ENCODE measurements at regions of chr7 and their contacts with region 1.

Region 1: DNA sequence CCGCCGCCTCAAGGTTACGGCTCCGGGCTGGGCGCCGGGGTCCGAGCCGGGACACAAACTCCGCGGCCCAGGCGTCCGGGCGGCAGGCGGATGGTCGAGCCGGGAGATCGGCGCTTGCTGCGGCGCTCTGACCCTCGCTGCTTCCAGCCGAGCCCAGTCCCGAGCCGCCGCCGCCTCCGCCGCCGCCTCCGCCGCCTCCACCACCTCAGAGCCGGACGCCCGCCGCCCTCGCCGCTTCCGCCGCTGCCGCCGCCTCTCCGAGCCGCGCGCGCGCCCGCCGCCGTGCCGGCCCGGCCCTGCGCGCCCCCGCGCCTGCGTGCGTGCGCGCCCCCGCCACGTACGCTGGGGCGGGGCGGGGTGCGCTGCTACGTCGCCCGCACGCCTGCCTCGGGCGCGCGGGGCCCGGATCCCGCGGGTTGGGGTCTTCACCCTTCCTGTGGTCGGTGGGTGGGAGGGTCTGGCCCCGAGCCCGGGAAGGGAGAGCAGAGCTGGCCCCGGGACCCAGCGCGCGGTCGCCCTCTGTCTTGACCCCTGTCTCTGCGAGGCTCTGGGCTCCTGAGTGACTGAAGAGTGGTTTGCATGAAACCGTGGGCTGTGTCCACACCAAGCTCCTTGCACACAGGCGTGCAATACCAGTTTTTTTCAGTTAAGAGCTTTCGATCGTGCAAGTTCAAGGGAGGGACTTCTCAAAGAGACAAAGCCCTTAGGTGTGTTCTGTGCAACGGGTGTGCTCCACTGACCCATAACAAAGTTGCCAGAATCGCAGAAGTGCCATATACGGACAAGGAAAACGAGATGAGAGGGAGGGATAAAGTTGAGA is at the start of gene SMURF1:
- DNase-seq: peak; percentile 69
- H3K4me3 Mint-ChIP-seq: peak within 1 kb of the TSS; percentile 90
- H3K27ac Mint-ChIP-seq: peak within 1 kb of the TSS; percentile 75
- H3K4me1 Mint-ChIP-seq: peaks cover 38% of the 10 kb centered on the region
- H3K27me3 Mint-ChIP-seq: no peaks in the 10 kb centered on the region
- total RNA-seq, gene SMURF1: 10.1 to 11.1 TPM

Region 2: DNA sequence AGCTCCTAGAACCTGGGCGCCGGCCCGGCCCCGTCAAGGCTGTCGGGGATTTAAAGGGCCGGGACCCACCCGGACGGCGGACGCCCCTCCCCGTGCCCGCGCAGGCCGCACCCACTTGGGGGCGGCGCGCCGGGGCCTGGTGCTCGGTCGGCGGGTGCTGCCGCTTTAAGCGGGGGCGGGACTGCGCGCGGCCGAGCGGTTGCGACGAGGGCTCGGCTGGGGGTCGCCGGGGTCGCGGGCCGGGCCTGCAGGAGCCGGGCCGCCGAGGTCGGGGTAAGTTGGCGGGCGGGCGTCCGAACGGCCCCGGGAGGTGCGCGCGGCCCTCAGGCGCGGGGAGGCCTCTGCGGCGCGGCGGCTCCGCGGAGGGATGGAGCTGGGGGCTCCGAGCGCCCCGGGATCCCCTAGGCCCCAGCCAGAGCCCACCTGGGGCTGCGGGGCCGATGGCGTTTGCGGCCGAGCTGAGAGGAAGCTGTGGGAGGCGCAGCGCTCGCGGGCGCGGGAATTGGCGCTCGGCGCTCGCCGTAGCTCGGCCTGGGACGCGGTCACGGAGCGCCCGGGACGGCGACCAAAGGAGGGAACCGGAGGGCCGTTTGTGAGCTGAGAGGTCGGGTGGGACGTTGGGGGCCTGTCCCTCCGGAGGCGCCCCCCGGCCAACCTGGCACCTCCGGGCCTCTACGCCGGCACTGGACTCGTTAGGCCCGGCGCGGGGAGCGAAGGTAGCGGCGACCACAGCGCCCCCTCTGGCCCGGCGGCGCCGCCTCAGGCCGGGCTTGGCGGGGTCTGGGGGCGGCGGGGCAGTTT is 265.5 kb before region 1 on chr7 and contains the start of gene TRRAP:
- CTCF ChIA-PET with region 1: no interaction called
- intact Hi-C with region 1: loop called (anchors 2 kb)
- DNase-seq: peak; percentile 78
- H3K4me3 Mint-ChIP-seq: peak within 1 kb of the TSS; percentile 88
- H3K27ac Mint-ChIP-seq: peak within 1 kb of the TSS; percentile 94
- H3K4me1 Mint-ChIP-seq: peaks cover 30% of the 10 kb centered on the region
- H3K27me3 Mint-ChIP-seq: no peaks in the 10 kb centered on the region
- total RNA-seq, gene TRRAP: 33.5 to 37.4 TPM

Region 3: GRCh38 chr7:99079104-99079503 is 65.0 kb before region 1 on chr7:
- CTCF ChIA-PET with region 1: no interaction called
- intact Hi-C with region 1: loop called (anchors 1 kb)
- DNase-seq: peak; percentile 68
- H3K4me3 Mint-ChIP-seq: peak overlapping the region; percentile 10
- H3K27ac Mint-ChIP-seq: peak overlapping the region; percentile 60
- H3K4me1 Mint-ChIP-seq: peaks cover 28% of the 10 kb centered on the region
- H3K27me3 Mint-ChIP-seq: no peaks in the 10 kb centered on the region

Region 4: DNA sequence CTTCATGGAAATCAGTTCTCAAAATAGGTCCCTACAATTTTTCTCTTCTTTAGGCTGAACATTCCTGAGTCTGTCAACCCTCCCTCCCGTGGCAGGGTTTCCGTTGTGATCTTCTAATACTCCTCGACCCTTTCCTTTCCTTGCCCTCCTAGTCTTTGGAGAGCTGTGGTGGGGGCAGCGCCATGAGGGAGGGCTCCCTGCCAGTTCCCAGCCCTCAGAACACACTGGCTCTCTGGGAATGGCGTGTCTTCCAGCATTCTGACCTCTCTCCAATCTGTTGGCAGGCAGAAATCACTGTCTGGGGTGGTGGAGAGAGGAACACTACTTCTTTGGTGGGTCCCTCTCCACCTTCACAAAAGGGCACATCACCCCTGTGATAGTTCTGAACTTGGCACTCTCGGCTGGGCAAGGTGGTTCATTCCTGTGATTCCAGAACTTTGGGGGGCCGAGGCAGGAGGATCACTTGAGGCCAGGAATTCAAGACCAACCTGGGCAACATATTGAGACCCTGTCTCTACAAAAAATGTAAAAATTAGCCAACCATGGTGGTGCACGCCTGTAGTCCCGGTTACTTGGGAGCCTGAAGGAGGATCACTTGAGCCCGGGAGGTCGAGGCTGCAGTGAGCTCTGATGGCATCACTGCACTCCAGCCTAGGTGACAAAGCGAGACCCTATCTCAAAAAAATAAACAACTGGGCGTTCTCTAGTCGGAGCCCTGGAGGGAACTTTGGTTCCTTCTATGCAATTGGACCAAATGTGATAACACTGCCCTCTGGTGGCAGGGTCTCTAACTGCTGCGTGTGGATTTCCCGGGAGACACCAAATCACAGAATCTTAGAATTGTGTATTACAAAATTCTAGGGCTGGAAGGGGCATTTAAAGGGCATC is 168.5 kb after region 1 on chr7:
- CTCF ChIA-PET with region 1: no interaction called
- intact Hi-C with region 1: loop called (anchors 5 kb)
- DNase-seq: peak; percentile 86
- H3K4me3 Mint-ChIP-seq: no peak overlapping the region
- H3K27ac Mint-ChIP-seq: no peak overlapping the region
- H3K4me1 Mint-ChIP-seq: peaks cover 12% of the 10 kb centered on the region
- H3K27me3 Mint-ChIP-seq: no peaks in the 10 kb centered on the region

Region 5: DNA sequence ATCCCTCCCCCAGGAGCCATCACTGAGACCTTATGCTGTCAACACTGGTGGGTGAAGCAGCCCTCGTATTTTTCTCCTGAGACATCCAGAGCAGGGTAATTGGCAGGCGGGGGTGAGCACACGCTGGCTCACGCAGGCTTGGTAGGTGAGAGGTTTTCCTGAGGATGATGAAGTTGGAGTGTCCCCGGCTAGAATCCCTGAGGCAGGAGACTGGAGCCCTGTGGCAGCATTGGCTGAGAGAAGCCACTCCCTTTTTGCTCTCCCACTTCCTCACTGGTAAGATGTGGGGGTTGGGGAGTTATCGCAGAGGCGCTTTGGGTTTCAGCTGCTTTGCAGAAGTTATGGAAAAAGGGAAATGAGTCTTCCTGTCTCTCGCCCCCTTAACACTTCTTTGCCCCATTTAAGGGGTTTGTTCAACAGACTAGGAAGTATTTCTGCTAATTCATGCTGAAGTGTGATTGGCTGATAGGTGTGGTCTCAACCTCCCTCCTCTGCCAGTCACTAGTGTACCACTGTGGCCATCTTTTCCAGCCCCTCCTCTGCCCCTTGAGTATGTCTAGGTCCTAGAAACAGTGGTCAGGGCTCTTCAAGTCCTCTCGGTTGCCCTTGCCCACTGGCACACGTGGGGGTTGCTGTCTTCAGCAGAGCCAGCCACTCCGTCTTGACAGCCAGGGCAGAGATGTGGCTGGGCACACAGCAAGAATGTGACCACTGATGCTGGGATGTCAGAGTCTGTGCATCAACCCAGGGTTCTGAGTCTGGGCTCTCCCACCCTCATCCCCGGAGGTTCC is 236.2 kb after region 1 on chr7:
- CTCF ChIA-PET with region 1: no interaction called
- intact Hi-C with region 1: loop called (anchors 1 kb)
- DNase-seq: peak; percentile 69
- H3K4me3 Mint-ChIP-seq: peak overlapping the region; percentile 81
- H3K27ac Mint-ChIP-seq: peak overlapping the region; percentile 97
- H3K4me1 Mint-ChIP-seq: peaks cover 61% of the 10 kb centered on the region
- H3K27me3 Mint-ChIP-seq: no peaks in the 10 kb centered on the region

Measured in activated naive CD4-positive, alpha-beta T cell treated with anti-CD3 and anti-CD28 coated beads for 36 hours (primary cell).